Right ventricle myocardium superior (tissue), 1 donor: ENCODE measurements at regions of chr16 and their contacts with region 1.

Region 1: GRCh38 chr16:84726079-84726668 is 26.4 kb downstream of the USP10 start:
- DNase-seq: peak; percentile 95
- ATAC-seq: peak; percentile 82

Region 2: GRCh38 chr16:84357191-84357651 is 369.0 kb before region 1 on chr16:
- intact Hi-C with region 1: no loop called
- DNase-seq: no peak
- ATAC-seq: no peak

Region 3: DNA sequence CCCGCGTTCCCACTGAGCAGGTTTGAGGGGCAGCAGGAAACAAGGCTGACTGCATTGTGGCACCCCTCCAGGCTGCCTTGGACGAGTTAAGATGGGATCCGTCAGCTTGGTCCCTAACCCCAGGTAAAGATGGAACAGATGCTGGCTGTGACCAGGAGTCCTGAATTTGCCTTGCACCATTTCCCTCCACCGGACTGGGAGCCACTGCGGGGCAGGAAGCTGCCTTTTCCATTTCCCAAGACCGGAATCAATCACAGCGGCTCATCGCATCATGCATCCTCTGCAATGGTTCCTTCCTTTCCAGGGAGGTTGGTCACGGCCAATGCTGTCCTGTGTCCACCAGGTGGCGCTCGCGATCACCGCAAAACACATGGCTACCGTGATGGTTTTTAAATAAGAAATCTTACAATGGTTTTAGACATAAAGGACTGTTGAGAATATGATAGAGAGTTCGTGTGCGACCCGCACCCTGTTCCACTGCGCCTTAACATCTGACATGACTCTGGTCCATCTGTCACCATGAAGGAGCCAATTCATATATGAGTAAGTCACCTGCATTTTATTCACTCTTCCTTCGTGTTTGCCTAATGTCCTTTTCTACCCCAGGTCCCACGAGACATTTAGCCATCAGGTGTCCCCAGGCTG is 214.9 kb before region 1 on chr16:
- intact Hi-C with region 1: loop called (anchors 10 kb)
- DNase-seq: peak; percentile 88
- ATAC-seq: peak; percentile 88